ENCODE measurements at regions of chr3 and their contacts with region 1.

Region 1: DNA sequence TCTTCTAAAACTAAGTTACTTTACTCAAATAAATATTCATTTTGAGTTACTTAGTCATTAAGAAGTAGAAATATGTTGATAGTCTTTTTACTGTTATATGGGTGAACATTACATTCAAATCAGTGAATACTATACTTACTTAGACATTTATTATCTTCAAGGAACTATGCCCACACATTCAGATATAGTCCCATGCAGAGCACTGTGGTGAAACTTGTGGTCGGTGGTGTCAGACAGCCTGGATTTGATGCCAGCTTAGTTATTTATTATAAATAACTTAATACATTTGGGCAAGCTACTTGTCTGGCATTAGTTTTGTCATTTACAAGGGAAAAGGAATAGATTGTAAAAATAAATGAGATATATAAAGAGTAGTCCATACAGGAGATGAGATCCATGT is 149.5 kb downstream of the RAP2B start:
- DNase-seq: no peak
- ATAC-seq: no peak
- H3K4me3 ChIP-seq: no peak overlapping the region
- H3K27ac ChIP-seq: no peak overlapping the region
- H3K4me1 ChIP-seq: no peaks in the 10 kb centered on the region
- H3K27me3 ChIP-seq: no peaks in the 10 kb centered on the region
- CTCF ChIP-seq: no peak

Region 2: GRCh38 chr3:153400641-153401040 is 89.1 kb after region 1 on chr3:
- CTCF ChIA-PET with region 1: no interaction called
- POLR2A ChIA-PET with region 1: interaction called, 11 read pairs
- in situ Hi-C with region 1: no loop called
- intact Hi-C with region 1: no loop called
- DNase-seq: no peak
- ATAC-seq: no peak
- H3K4me3 ChIP-seq: no peak overlapping the region
- H3K27ac ChIP-seq: no peak overlapping the region
- H3K4me1 ChIP-seq: no peaks in the 10 kb centered on the region
- H3K27me3 ChIP-seq: no peaks in the 10 kb centered on the region
- CTCF ChIP-seq: no peak

Measured in Panc1 (cell line).